Caco-2 (cell line): ENCODE measurements at regions of chr1 and their contacts with region 1.

Region 1: GRCh38 chr1:156090822-156091188 is 8.5 kb upstream of the MEX3A start:
- DNase-seq: peak; percentile 86 to 89
- H3K4me3 ChIP-seq: no peak overlapping the region
- H3K4me3 Mint-ChIP-seq: no peak overlapping the region
- H3K27ac Mint-ChIP-seq: peak overlapping the region; percentile 60
- H3K4me1 ChIP-seq: peaks cover 24% of the 10 kb centered on the region
- H3K4me1 Mint-ChIP-seq: peaks cover 29% of the 10 kb centered on the region
- H3K27me3 ChIP-seq: no peaks in the 10 kb centered on the region
- H3K27me3 Mint-ChIP-seq: no peaks in the 10 kb centered on the region
- CTCF ChIP-seq: peak; percentile 76 to 92

Region 2: DNA sequence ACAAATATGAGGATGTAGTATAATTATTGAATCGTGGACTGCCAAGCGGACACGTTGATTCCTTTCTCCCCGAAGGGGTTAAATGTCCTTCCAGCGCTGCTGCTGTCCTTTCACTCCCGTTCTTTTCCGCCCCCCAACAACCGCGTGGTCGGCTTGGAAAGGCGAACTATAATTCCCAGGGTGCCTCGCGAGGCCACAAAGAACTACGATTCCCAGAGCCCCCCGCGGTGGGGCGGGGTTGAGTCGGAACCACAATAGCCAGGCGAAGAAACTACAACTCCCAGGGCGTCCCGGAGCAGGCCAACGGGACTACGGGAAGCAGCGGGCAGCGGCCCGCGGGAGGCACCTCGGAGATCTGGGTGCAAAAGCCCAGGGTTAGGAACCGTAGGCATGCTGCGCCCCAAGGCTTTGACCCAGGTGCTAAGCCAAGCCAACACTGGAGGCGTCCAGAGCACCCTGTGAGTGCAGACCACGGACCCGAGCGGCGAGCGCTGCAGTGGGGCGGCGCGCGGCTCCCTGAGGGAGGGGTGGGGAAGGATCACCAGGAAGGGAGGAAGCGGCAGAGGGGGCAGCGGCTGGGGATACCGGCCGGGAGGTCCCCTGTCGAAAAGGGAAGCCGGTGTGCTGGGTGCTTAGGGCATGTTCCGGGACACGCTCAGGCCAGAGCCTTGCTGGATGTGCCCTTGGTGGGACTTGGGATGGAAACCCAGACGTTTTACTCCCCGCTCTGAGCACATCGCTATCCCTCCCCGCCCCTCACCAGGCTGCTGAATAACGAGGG is 36.1 kb before region 1 on chr1 and contains the start of gene LAMTOR2:
- CTCF ChIA-PET with region 1: no interaction called
- POLR2A ChIA-PET with region 1: no interaction called
- intact Hi-C with region 1: loop called (anchors 2 kb)
- DNase-seq: peak; percentile 98
- H3K4me3 ChIP-seq: peak within 1 kb of the TSS; percentile 86
- H3K4me3 Mint-ChIP-seq: peak within 1 kb of the TSS; percentile 98
- H3K27ac Mint-ChIP-seq: peak within 1 kb of the TSS; percentile 91
- H3K4me1 ChIP-seq: peaks cover 14% of the 10 kb centered on the region
- H3K4me1 Mint-ChIP-seq: no peaks in the 10 kb centered on the region
- H3K27me3 ChIP-seq: no peaks in the 10 kb centered on the region
- H3K27me3 Mint-ChIP-seq: no peaks in the 10 kb centered on the region
- CTCF ChIP-seq: peak in 1 of 2 experiments; percentile 5
- total RNA-seq, gene LAMTOR2: 49.4 and 49.5 TPM in 2 replicates

Region 3: DNA sequence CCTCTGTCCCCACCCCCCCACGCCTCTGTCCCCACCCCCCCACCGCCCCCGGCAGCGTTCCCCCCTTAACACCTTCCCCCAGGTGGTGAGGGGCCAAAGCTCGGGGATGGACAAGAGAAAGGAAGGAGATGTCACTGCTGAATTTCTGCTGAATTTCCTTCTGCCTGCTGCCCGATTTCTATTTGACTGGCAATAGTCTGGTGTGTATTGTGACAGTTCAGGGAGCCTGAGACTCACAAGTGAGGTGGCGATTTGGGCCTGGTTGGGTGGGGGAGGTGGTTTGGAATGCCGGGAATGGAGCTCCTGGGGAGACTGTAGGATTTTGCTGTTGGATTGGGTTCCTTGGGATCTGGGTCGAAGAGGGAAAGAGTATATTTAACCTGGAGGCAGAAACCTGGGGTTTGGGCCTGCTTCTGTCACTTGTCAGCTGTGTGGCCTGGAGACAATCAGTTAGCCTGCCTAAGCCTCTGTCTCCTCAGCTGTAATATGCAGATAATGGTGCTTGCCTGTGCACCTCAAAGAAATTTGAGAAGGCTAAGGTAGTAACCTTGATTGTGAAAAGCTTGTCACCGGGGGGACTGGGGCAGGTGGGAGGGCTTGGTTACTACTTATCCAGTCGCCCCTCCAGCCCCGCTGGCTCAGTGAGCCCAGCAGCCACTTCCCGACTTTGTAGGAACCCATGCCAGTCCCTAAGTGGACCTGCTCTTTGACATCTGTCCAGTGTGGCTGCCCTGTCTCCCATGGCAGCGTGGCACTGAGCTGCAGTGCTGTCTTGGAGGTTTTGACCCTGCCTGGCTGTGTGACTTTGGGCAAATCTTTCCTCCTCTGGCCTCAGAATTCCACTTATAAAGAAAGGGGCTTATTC is 16.1 kb after region 1 on chr1:
- CTCF ChIA-PET with region 1: interaction called, 3 read pairs
- POLR2A ChIA-PET with region 1: no interaction called
- intact Hi-C with region 1: loop called (anchors 1 kb)
- DNase-seq: peak; percentile 57 to 65
- H3K4me3 ChIP-seq: peak overlapping the region; percentile 15; the same call in 1 of the 2 replicates
- H3K4me3 Mint-ChIP-seq: peak overlapping the region; percentile 71
- H3K27ac Mint-ChIP-seq: peak overlapping the region; percentile 86
- H3K4me1 ChIP-seq: peaks cover 33% of the 10 kb centered on the region
- H3K4me1 Mint-ChIP-seq: peaks cover 40% of the 10 kb centered on the region
- H3K27me3 ChIP-seq: no peaks in the 10 kb centered on the region
- H3K27me3 Mint-ChIP-seq: no peaks in the 10 kb centered on the region
- CTCF ChIP-seq: no peak